AG04450 (cell line): ENCODE measurements at regions of chr22 and their contacts with region 1.

Region 1: GRCh38 chr22:31378123-31378522 is 21.3 kb upstream of the DRG1 start:
- DNase-seq: no peak
- H3K4me3 ChIP-seq: no peak overlapping the region
- H3K27ac ChIP-seq: no peak overlapping the region
- H3K27me3 ChIP-seq: peaks cover 3% of the 10 kb centered on the region
- CTCF ChIP-seq: no peak

Region 2: DNA sequence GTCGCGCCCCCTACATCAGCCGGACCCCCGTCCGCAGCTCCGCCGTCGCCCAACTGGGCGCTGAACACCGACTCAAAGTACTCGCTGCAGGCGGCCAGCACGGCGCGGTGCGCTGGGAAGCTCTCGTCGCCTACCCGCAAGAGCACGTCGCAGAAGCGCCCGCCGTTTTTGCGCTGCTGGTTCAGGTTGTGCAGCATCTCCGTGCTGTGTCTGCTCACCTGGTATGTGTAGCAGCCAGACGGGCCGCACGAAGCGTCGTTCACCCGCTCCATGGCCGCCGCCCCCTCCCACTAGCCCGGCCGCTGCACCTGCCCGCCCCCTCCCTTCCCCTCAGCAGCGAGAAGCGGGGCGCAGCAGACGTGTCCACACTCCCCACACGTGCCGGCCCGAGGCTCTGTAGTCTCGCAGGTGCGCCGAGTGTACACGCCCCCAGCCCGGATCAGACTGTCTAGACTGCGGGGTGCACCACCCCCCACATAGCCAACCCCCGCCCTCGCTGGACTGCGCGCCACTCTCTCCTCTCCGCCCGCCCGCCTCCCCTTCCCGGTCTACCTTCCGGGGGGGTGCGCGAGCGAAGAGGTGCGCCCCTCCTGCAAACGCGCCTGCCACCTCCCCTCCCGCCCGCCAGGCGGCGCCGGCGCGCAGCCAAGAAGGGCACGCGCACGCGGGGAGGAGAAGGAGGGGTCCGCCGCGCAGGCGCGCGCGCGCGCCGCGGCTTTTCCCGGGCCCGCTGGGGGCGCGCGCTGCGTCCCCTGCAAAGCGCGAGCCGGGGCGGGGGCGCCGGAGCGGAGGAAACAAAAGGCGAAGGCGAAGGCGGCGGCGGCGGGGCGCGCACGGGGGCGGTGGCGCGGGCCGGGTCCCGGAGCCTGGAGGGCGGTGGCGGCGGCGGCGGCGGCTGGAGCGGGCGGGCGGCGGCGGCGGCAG is 32.5 kb before region 1 on chr22:
- CTCF ChIA-PET with region 1: no interaction called
- POLR2A ChIA-PET with region 1: interaction called, 14 read pairs
- DNase-seq: peak; percentile 34
- H3K4me3 ChIP-seq: peak overlapping the region; percentile 72
- H3K27ac ChIP-seq: no peak overlapping the region
- H3K27me3 ChIP-seq: no peaks in the 10 kb centered on the region
- CTCF ChIP-seq: peak; percentile 68